MCF 10A (cell line): ENCODE measurements at regions of chr3 and their contacts with region 1.

Region 1: GRCh38 chr3:17841190-17841828 is 98.9 kb upstream of the TBC1D5 start:
- DNase-seq: peak; percentile 67
- H3K4me3 Mint-ChIP-seq: no peak overlapping the region
- H3K27ac Mint-ChIP-seq: no peak overlapping the region
- H3K4me1 Mint-ChIP-seq: peaks cover 7% of the 10 kb centered on the region
- H3K27me3 Mint-ChIP-seq: no peaks in the 10 kb centered on the region
- CTCF ChIP-seq: peak; percentile 95

Region 2: GRCh38 chr3:17412950-17413530 is 428.3 kb before region 1 on chr3:
- CTCF ChIA-PET with region 1: interaction called, 22 read pairs
- POLR2A ChIA-PET with region 1: no interaction called
- intact Hi-C with region 1: no loop called
- DNase-seq: peak; percentile 66
- H3K4me3 Mint-ChIP-seq: no peak overlapping the region
- H3K27ac Mint-ChIP-seq: no peak overlapping the region
- H3K4me1 Mint-ChIP-seq: no peaks in the 10 kb centered on the region
- H3K27me3 Mint-ChIP-seq: no peaks in the 10 kb centered on the region
- CTCF ChIP-seq: peak; percentile 67

Region 3: GRCh38 chr3:17473761-17474160 is 367.5 kb before region 1 on chr3:
- CTCF ChIA-PET with region 1: interaction called, 25 read pairs
- POLR2A ChIA-PET with region 1: interaction called, 4 read pairs
- intact Hi-C with region 1: loop called (anchors 1 kb)
- DNase-seq: peak; percentile 31
- H3K4me3 Mint-ChIP-seq: no peak overlapping the region
- H3K27ac Mint-ChIP-seq: no peak overlapping the region
- H3K4me1 Mint-ChIP-seq: peaks cover 9% of the 10 kb centered on the region
- H3K27me3 Mint-ChIP-seq: no peaks in the 10 kb centered on the region
- CTCF ChIP-seq: peak; percentile 31

Region 4: DNA sequence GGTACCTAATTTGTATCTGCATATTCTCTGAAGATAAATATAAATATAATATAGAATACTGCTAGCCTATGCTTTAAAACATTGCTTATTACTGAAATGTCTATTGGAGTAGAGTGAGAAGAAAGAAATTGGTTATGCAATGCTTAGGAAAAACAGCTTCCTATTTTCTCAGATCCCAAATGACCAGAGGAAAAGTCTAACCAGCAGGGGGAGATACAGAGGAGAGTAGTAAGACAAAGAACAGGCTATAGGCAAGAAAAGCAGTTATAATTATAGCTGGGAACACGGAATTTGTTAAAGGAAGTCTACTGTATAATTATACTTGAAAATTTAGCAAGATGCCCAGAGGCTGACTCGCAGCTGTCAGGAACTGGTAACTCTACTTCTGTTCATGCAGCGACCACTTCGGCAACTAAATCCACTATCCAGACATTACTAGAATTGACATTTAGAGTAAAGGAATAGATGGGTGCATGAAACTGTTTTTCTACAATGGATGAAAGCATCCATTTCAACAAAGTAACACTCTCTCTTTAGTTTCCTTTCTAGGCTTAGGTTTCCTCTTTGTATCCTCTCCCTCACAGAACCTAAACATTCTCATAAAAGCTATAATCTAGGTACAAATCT is 196.1 kb before region 1 on chr3:
- CTCF ChIA-PET with region 1: interaction called, 52 read pairs
- POLR2A ChIA-PET with region 1: interaction called, 3 read pairs
- intact Hi-C with region 1: loop called (anchors 1 kb)
- DNase-seq: peak; percentile 81
- H3K4me3 Mint-ChIP-seq: no peak overlapping the region
- H3K27ac Mint-ChIP-seq: no peak overlapping the region
- H3K4me1 Mint-ChIP-seq: no peaks in the 10 kb centered on the region
- H3K27me3 Mint-ChIP-seq: no peaks in the 10 kb centered on the region
- CTCF ChIP-seq: peak; percentile 56

Region 5: DNA sequence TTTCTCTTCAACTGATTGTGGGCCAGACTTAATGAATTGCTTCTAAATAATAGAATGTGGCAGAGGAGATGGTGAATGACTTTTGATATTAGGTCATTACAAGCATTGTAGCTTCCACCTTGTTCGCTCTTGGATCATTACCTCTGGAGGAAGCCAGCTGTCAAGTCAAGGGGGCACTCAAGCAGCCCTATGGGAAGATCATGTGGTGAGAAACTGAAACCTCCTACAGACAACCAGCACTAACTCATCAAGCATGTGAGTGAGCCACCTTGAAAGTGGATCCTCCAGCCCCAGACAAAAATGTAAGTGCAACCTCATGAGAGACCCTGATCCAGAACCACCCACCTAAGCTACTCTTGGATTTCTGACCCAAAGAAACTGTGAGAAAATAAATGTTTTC is 10.9 kb after region 1 on chr3:
- CTCF ChIA-PET with region 1: interaction called, 25 read pairs
- POLR2A ChIA-PET with region 1: no interaction called
- intact Hi-C with region 1: no loop called
- DNase-seq: no peak
- H3K4me3 Mint-ChIP-seq: no peak overlapping the region
- H3K27ac Mint-ChIP-seq: no peak overlapping the region
- H3K4me1 Mint-ChIP-seq: no peaks in the 10 kb centered on the region
- H3K27me3 Mint-ChIP-seq: peaks cover 23% of the 10 kb centered on the region
- CTCF ChIP-seq: no peak